CD14-positive monocyte (primary cell): ENCODE measurements at regions of chr16 and their contacts with region 1.

Region 1: DNA sequence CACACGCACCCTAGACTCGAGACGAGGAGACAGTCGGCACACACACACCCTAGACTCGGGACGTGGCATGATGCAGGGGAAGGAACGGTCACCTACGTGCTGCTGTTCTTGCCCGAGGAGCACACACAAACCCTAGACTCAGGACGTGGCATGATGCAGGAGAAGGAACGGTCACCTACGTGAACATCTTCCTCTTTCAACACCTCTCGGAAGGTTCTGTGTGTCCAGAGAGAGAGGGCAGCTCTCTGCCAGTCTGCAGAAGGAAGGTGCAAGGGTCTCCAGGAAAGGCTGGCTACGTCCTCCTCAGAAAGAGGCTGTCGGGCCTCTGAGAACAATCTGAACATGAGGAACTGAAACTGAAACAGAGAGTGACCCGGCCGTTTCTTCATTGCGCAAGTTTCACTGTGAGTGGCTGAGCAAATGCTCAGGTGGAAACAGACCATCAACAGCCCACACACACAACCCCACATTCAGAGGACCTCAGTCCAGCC is 43.4 kb downstream of the ZNF276 start:
- DNase-seq: peak; percentile 87 to 93 (median 92)
- H3K4me3 ChIP-seq: peak overlapping the region; percentile 38 to 96 (median 95)
- H3K4me3 Mint-ChIP-seq: peak overlapping the region; percentile 89 to 97
- H3K27ac ChIP-seq: peak overlapping the region; percentile 87 to 99
- H3K27ac Mint-ChIP-seq: peak overlapping the region; percentile 94 to 99 (median 98)
- H3K4me1 ChIP-seq: peaks cover 32 to 52% of the 10 kb centered on the region in 2 donors
- H3K4me1 Mint-ChIP-seq: peaks cover 45% of the 10 kb centered on the region
- H3K27me3 ChIP-seq: no peaks in the 10 kb centered on the region
- H3K27me3 Mint-ChIP-seq: no peaks in the 10 kb centered on the region
- CTCF ChIP-seq: no peak

Region 2: DNA sequence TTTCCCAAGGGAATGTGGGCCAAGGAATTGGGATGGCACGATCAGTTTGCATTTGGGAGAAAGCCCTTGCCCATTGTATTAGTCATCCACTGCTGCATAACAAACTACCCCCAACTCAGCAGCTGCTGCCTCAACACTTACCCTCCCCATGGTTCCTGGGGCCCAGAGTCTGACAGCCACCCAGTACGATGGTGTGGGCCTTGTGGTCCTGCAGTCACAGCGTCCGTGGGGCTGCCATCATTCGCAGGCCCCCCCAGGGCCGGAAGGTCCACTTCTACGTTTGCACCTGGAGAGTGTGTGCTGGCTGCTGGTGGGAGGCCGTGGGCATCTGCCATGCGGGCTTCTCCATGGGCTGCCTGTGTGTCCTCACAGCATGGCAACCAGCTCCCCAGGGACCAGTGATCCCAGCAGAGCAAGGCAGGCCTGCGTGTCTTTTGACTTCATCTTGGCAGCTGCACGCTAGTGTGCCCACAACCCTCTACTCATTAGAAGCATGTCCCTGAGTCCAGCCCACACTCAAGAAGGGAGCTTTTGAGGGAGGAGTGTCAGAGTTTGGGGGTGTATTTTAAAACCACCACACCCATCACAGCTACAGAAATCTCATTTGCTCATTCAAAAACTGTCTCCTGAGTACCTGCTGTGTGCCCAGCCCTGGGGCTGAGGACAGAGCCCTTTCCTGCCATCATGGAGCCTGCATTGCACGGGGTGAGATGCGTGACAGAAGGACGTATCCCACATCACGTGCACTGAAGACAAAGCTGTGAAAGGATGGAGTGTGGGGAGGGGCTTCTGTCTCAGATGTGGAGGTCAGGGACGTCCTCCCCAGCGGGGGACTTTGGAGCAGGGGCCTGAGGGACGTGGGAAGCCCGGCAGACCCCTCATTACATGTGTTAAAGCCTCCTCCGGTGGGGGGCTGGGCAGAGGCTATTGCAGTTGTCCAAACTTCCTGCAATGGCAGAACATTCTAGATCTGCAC is 1567.0 kb before region 1 on chr16:
- intact Hi-C with region 1: no loop called
- DNase-seq: no peak
- H3K4me3 ChIP-seq: no peak overlapping the region
- H3K4me3 Mint-ChIP-seq: no peak overlapping the region
- H3K27ac ChIP-seq: no peak overlapping the region
- H3K27ac Mint-ChIP-seq: no peak overlapping the region
- H3K4me1 ChIP-seq: peaks cover 0 to 8% of the 10 kb centered on the region in 2 donors
- H3K4me1 Mint-ChIP-seq: peaks cover 10% of the 10 kb centered on the region
- H3K27me3 ChIP-seq: no peaks in the 10 kb centered on the region
- H3K27me3 Mint-ChIP-seq: peaks cover 3 to 12% (median 8%) of the 10 kb centered on the region in 3 donors
- CTCF ChIP-seq: no peak

Region 3: DNA sequence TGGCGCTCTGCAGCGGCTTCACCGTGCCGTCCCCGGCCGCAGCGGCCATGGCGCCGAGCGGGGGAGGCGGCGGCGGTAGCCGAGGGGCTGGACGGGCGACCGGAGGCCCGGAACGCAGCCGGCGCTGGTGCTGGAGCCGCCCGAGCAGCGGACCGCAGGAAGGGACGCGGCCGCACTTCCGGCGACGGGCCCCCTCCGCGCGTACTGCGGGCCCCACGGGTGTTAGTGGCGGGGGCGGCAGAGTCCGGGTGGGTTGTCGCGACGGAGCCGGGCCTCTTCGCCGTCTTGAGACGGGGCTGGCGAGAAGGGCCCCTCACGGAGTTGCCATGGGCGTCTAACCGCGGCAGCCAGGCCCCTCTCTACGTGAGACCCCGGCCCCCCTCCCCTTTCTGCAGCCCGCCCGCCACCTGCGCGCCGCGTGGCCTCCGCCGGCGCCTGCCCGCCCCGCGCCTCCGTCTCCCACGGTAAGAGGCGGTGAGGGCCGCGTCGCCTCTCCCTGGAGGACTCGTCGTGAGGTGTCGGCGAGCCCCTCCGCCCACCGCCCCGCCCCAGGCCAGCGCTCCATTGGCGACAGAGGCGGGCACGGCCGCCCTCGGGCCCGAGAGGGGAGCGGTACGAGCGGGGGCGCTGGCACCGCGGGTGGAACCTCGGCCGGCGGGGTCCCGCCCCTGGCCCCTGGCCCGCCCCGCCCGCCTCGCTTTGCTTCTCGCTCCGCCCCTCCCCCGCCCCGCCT is 43.8 kb before region 1 on chr16 and contains the starts of genes VPS9D1 and ZNF276:
- intact Hi-C with region 1: loop called (anchors 2 to 5 kb)
- DNase-seq: peak; percentile 61 to 64 (median 61)
- H3K4me3 ChIP-seq: peak within 1 kb of the TSS; percentile 51 to 97 (median 64)
- H3K4me3 Mint-ChIP-seq: peak within 1 kb of the TSS; percentile 91 to 94
- H3K27ac ChIP-seq: peak within 1 kb of the TSS; percentile 92
- H3K27ac Mint-ChIP-seq: peak within 1 kb of the TSS; percentile 96 to 99 (median 98)
- H3K4me1 ChIP-seq: peaks cover 45 to 57% of the 10 kb centered on the region in 2 donors
- H3K4me1 Mint-ChIP-seq: peaks cover 51% of the 10 kb centered on the region
- H3K27me3 ChIP-seq: no peaks in the 10 kb centered on the region
- H3K27me3 Mint-ChIP-seq: no peaks in the 10 kb centered on the region
- CTCF ChIP-seq: no peak
- polyA plus RNA-seq, gene VPS9D1: 1.2 to 29.7 (median 1.6) TPM
- polyA plus RNA-seq, gene ZNF276: 2.2 to 54.5 (median 3.2) TPM

Region 4: GRCh38 chr16:89785523-89786155 is 20.9 kb after region 1 on chr16:
- intact Hi-C with region 1: no loop called
- DNase-seq: no peak
- H3K4me3 ChIP-seq: no peak overlapping the region
- H3K4me3 Mint-ChIP-seq: no peak overlapping the region
- H3K27ac ChIP-seq: no peak overlapping the region
- H3K27ac Mint-ChIP-seq: peak overlapping the region in 1 of 7 donors; percentile 52
- H3K4me1 ChIP-seq: no peaks in the 10 kb centered on the region
- H3K4me1 Mint-ChIP-seq: no peaks in the 10 kb centered on the region
- H3K27me3 ChIP-seq: no peaks in the 10 kb centered on the region
- H3K27me3 Mint-ChIP-seq: peaks cover 0 to 1% (median 0%) of the 10 kb centered on the region in 3 donors
- CTCF ChIP-seq: no peak

Region 5: GRCh38 chr16:89860747-89861304 is 96.1 kb after region 1 on chr16:
- intact Hi-C with region 1: no loop called
- DNase-seq: peak; percentile 50 to 58 (median 58)
- H3K4me3 ChIP-seq: no peak overlapping the region
- H3K4me3 Mint-ChIP-seq: no peak overlapping the region
- H3K27ac ChIP-seq: no peak overlapping the region
- H3K27ac Mint-ChIP-seq: no peak overlapping the region
- H3K4me1 ChIP-seq: peaks cover 31 to 35% of the 10 kb centered on the region in 2 donors
- H3K4me1 Mint-ChIP-seq: peaks cover 33% of the 10 kb centered on the region
- H3K27me3 ChIP-seq: no peaks in the 10 kb centered on the region
- H3K27me3 Mint-ChIP-seq: peaks cover 6 to 12% (median 10%) of the 10 kb centered on the region in 3 donors
- CTCF ChIP-seq: peak; percentile 97